ENCODE measurements at regions of chr17 and their contacts with region 1.

Region 1: GRCh38 chr17:8409966-8410864 is 12.6 kb upstream of the RNF222 start:
- DNase-seq: peak; percentile 87 to 90
- ATAC-seq: peak; percentile 87 to 96 (median 94)
- H3K4me3 ChIP-seq: no peak overlapping the region
- H3K27ac ChIP-seq: no peak overlapping the region
- H3K4me1 ChIP-seq: peaks cover 0 to 23% (median 4%) of the 10 kb centered on the region in 9 donors
- H3K27me3 ChIP-seq: peaks cover 0 to 6% (median 0%) of the 10 kb centered on the region in 7 donors
- CTCF ChIP-seq: peak; percentile 74 to 92 (median 87)

Region 2: DNA sequence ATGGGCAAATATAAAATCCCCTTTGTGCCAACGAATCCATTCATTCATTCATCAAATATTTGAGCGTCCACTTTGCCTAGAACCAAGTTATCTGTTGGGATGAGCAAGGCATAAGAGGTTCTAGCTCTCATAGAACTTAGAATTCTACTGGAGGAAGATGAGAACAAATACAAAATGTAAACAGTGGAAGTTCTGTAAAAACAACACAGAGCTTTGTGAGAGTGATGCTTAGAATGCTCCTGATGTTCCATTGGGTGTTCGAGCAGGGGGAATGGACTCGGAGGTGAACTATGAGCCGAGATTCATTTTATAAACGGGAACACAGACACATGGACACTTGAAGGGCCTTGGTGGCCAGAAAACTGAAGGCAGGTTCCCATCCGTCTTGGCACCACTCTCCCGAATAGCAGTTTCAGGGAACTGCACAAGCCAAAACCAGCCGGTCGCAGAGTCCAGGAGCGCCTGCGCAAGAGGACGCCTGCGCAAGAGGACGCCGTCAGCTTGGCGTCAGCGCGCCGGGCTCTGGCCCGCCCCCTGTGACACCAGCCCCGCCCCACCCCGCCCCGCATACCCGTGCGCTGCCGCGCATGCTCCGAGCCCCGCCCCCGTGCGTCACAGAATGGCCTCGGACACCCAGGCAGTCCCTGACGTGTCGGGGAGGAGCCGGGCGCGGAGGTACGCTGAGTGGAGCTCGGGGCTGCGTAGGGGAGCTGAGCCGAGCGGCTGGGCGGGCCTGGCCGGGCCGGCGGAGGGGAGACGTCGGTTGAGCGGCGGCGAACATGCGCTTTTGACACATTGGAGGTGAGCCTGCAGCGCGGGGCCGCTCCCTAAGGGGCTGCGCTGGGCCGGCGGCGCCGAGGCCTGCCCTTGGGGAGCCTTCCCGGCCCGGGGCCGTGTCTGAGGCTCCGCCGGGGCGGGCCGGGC is 25.3 kb after region 1 on chr17 and contains the start of gene NDEL1:
- intact Hi-C with region 1: no loop called
- DNase-seq: peak; percentile 99 to 100
- ATAC-seq: peak; percentile 97 to 99 (median 98)
- H3K4me3 ChIP-seq: peak within 1 kb of the TSS; percentile 77 to 98 (median 86)
- H3K27ac ChIP-seq: peak within 1 kb of the TSS; percentile 94 to 100 (median 100)
- H3K4me1 ChIP-seq: peaks cover 0 to 50% (median 30%) of the 10 kb centered on the region in 9 donors
- H3K27me3 ChIP-seq: no peaks in the 10 kb centered on the region
- CTCF ChIP-seq: no peak
- total RNA-seq, gene NDEL1: 21.2 to 37.0 (median 28.4) TPM

Region 3: GRCh38 chr17:8470447-8471047 is 60.3 kb after region 1 on chr17:
- intact Hi-C with region 1: loop called in 3 of 10 experiments (anchors 5 to 10 kb)
- DNase-seq: peak; percentile 48 to 72
- ATAC-seq: peak; percentile 27 to 63 (median 54)
- H3K4me3 ChIP-seq: no peak overlapping the region
- H3K27ac ChIP-seq: peak overlapping the region in 6 of 10 donors; percentile 21 to 73 (median 46)
- H3K4me1 ChIP-seq: peaks cover 10 to 66% (median 31%) of the 10 kb centered on the region in 9 donors
- H3K27me3 ChIP-seq: no peaks in the 10 kb centered on the region
- CTCF ChIP-seq: no peak

Region 4: GRCh38 chr17:8488901-8489300 is 78.7 kb after region 1 on chr17:
- intact Hi-C with region 1: loop called in 1 of 10 experiments (anchors 5 kb)
- DNase-seq: peak in 1 of 2 donors; percentile 43
- ATAC-seq: peak in 7 of 8 donors; percentile 74 to 93 (median 80)
- H3K4me3 ChIP-seq: no peak overlapping the region
- H3K27ac ChIP-seq: peak overlapping the region in 3 of 10 donors; percentile 29 to 45 (median 42)
- H3K4me1 ChIP-seq: peaks cover 0 to 4% (median 0%) of the 10 kb centered on the region in 9 donors
- H3K27me3 ChIP-seq: no peaks in the 10 kb centered on the region
- CTCF ChIP-seq: peak in 2 of 9 donors; percentile 10 to 21

Region 5: DNA sequence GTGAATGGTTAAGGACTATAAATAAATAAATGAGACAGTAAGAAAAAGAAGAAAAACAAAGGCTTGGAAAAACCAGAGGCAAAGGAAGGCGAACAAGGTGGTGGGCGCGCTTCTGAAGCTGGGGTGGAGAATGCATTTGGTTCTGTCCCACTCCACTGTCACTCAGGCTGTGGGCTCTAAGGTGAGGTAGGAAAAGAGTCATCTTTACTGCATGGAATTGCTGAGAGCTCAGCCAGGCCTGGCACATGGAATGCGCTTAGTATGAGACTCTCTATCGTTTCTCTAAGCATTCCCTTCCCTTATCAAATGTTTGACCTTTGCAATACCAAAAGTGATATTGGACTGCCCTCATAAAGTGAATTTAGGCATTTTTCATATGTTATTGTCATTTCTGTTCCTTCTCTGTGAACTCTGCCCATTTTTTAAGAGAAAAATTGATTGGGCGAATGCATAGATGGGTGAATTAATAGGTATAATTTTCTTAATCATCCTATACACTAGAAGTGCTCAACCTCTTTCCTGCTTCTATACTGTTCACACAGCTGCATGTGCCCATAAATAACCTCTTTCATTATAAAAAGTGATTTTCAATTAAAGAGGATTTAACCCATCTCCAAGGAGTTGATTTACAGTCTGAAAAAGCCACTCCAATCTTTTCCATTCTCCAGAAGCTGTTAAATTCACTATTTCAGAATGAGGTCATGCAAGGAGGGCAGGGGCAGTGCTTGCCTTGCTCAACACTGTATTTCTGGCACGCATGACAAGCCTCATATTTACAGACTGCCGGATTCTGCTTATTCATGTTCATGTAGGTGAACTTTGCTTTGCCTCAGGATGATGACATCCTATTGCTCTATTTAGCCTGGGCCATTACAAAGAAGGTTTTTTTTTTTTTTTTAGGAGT is 132.6 kb after region 1 on chr17:
- intact Hi-C with region 1: no loop called
- DNase-seq: peak in 1 of 2 donors; percentile 13
- ATAC-seq: peak; percentile 55 to 90 (median 83)
- H3K4me3 ChIP-seq: no peak overlapping the region
- H3K27ac ChIP-seq: peak overlapping the region in 5 of 10 donors; percentile 10 to 59 (median 38)
- H3K4me1 ChIP-seq: peaks cover 0 to 16% (median 0%) of the 10 kb centered on the region in 9 donors
- H3K27me3 ChIP-seq: no peaks in the 10 kb centered on the region
- CTCF ChIP-seq: no peak

Region 6: GRCh38 chr17:8745586-8746500 is 335.6 kb after region 1 on chr17:
- intact Hi-C with region 1: loop called (anchors 1 to 5 kb)
- DNase-seq: peak; percentile 71 to 80
- ATAC-seq: peak; percentile 90 to 96 (median 94)
- H3K4me3 ChIP-seq: peak overlapping the region; percentile 54 to 91 (median 74)
- H3K27ac ChIP-seq: peak overlapping the region in 7 of 10 donors; percentile 39 to 88 (median 64)
- H3K4me1 ChIP-seq: peaks cover 0 to 14% (median 5%) of the 10 kb centered on the region in 9 donors
- H3K27me3 ChIP-seq: peaks cover 0 to 5% (median 0%) of the 10 kb centered on the region in 7 donors
- CTCF ChIP-seq: peak; percentile 92 to 99 (median 97)

Region 7: GRCh38 chr17:8894673-8895578 is 484.7 kb after region 1 on chr17:
- intact Hi-C with region 1: loop called in 3 of 10 experiments (anchors 10 kb)
- DNase-seq: peak in 1 of 2 donors; percentile 61
- ATAC-seq: peak; percentile 72 to 91 (median 82)
- H3K4me3 ChIP-seq: peak overlapping the region in 2 of 10 donors; percentile 9 to 13
- H3K27ac ChIP-seq: no peak overlapping the region
- H3K4me1 ChIP-seq: peaks cover 0 to 39% (median 0%) of the 10 kb centered on the region in 9 donors
- H3K27me3 ChIP-seq: peaks cover 0 to 13% (median 0%) of the 10 kb centered on the region in 7 donors
- CTCF ChIP-seq: peak; percentile 73 to 91 (median 85)

Measured in heart right ventricle (tissue), 16 donors.